ENCODE measurements at regions of chr7 and their contacts with region 1.

Region 1: GRCh38 chr7:134943764-134944400 is 42.4 kb upstream of the AGBL3 start:
- DNase-seq: peak; percentile 52
- ATAC-seq: peak; percentile 84
- H3K4me3 ChIP-seq: no peak overlapping the region
- H3K27ac ChIP-seq: no peak overlapping the region
- H3K4me1 ChIP-seq: no peaks in the 10 kb centered on the region
- H3K27me3 ChIP-seq: no peaks in the 10 kb centered on the region
- CTCF ChIP-seq: peak; percentile 67; the same call in 1 of the 2 replicates

Region 2: GRCh38 chr7:133978502-133979295 is 965.2 kb before region 1 on chr7:
- CTCF ChIA-PET with region 1: no interaction called
- POLR2A ChIA-PET with region 1: no interaction called
- in situ Hi-C with region 1: no loop called
- intact Hi-C with region 1: no loop called
- DNase-seq: no peak
- ATAC-seq: no peak
- H3K4me3 ChIP-seq: no peak overlapping the region
- H3K27ac ChIP-seq: no peak overlapping the region
- H3K4me1 ChIP-seq: no peaks in the 10 kb centered on the region
- H3K27me3 ChIP-seq: no peaks in the 10 kb centered on the region
- CTCF ChIP-seq: no peak

Region 3: DNA sequence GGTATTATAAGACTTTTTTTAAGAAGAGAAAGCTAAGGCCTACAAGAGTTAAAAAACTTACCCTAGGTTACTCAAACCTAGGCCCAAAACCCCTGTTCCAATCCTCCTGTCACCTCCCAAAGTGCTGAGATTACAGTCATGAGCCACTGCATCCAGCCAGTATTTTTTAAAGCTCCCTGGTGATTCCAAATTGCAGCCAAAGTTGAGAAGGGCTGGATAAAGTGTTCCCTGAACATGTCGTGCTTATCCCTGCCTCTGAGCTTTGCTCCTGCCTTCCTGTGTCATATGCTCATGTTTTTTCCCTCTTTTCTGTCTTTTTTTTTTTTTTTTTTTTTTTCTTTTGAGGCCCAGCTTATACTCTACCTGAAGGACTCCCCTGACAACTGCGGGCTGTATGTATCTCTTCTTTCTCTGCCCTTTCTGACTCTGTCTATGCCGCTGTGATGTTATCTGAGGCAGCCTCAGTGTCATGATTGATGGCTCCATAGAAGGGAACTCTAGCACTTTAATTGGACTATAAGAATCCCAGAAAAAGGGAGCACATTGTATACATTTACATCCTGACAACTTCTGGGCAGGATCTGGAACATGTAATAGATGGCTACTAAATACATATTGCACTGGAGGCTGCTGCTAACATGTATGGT is 408.5 kb before region 1 on chr7:
- CTCF ChIA-PET with region 1: no interaction called
- POLR2A ChIA-PET with region 1: no interaction called
- in situ Hi-C with region 1: no loop called
- intact Hi-C with region 1: no loop called
- DNase-seq: no peak
- ATAC-seq: no peak
- H3K4me3 ChIP-seq: no peak overlapping the region
- H3K27ac ChIP-seq: no peak overlapping the region
- H3K4me1 ChIP-seq: no peaks in the 10 kb centered on the region
- H3K27me3 ChIP-seq: peaks cover 2% of the 10 kb centered on the region; the same call in 1 of the 2 replicates
- CTCF ChIP-seq: no peak

Region 4: GRCh38 chr7:134632937-134633540 is 310.8 kb before region 1 on chr7:
- CTCF ChIA-PET with region 1: interaction called, 4 read pairs
- POLR2A ChIA-PET with region 1: no interaction called
- in situ Hi-C with region 1: no loop called
- intact Hi-C with region 1: loop called (anchors 2 kb)
- DNase-seq: no peak
- ATAC-seq: peak; percentile 86
- H3K4me3 ChIP-seq: no peak overlapping the region
- H3K27ac ChIP-seq: no peak overlapping the region
- H3K4me1 ChIP-seq: no peaks in the 10 kb centered on the region
- H3K27me3 ChIP-seq: 0 out of 2 replicates have a peak, but pooled peaks cover 3% of the 10 kb centered on the region
- CTCF ChIP-seq: peak; percentile 71

Region 5: DNA sequence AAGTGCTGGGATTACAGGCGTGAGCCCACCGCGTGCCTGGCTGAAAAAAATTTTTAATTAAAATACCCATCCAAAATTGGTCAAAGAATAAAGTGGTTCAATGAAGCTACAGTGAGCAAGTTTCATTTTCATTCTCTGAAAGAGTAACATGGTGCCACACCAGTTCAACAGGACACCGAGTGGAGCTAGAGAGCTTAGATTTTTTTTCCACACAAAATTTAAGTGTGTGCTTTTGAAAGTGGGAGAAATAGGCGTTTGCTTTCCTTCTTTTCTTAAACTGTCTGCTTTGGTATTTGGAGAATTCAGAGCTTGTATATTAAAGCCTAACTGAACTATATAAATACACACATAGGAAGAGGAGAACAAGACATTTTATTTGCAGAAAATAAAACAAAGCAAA is 253.9 kb before region 1 on chr7:
- CTCF ChIA-PET with region 1: interaction called, 6 read pairs
- POLR2A ChIA-PET with region 1: no interaction called
- in situ Hi-C with region 1: no loop called
- intact Hi-C with region 1: loop called (anchors 5 kb)
- DNase-seq: no peak
- ATAC-seq: 0 out of 2 replicates have a peak, but pooled peaks have one; percentile 48
- H3K4me3 ChIP-seq: peak overlapping the region in 1 of 2 experiments; percentile 25; a peak in 1 of 4 replicates
- H3K27ac ChIP-seq: no peak overlapping the region
- H3K4me1 ChIP-seq: no peaks in the 10 kb centered on the region
- H3K27me3 ChIP-seq: no peaks in the 10 kb centered on the region
- CTCF ChIP-seq: peak; percentile 23; the same call in 1 of the 2 replicates